ENCODE measurements at regions of chr4 and their contacts with region 1.

Region 1: DNA sequence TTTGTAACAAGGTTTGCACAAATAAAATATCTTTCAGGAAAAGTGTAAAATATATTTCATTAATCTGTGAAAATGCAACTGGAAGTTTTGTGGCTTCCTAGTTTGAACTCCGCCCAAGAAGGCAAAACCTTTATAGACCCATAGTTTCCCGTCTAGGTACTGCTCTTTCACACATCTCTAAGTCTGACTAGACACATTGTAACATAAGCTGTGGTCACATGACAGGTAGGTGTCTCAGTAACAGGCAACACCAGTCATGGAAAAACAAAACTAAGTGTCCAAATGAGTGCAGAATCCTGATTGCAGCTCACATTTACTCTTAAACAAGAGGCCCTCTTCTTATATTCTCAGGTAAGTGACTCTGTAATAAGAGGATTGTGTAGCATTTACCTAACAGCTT is 55.6 kb downstream of the SNCA start:
- DNase-seq: no peak
- ATAC-seq: no peak
- H3K4me3 ChIP-seq: no peak overlapping the region
- H3K27ac ChIP-seq: no peak overlapping the region
- H3K4me1 ChIP-seq: no peaks in the 10 kb centered on the region
- H3K27me3 ChIP-seq: peaks cover 18% of the 10 kb centered on the region
- CTCF ChIP-seq: no peak

Region 2: DNA sequence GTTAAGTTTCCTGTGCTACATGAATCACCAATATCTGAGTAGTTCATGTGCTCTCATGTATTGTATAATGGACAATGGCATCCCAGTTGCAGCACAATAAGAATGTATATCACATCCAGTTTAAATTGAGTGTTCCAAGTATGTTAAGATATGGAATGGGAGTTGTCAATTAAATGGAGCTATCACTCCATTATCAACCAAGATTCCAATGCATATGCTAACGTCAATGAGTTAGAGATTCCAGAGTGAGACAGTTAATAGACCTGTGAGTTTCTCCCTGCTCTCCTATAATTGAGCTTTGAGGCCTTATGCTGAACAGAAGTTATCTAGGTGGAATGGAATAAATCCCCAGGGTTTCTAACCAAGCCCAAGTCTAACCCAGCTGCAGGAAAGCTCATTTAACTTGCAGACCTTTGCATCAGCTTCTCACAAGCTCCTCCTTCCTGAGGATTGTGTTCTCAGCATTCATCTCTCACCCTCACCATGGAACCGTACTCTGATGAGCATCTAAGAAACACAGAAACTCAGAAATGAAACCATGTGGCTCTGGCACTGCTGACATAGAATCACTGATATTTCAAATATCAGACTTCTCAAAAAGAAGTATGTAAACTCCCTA is 585.2 kb before region 1 on chr4:
- CTCF ChIA-PET with region 1: no interaction called
- POLR2A ChIA-PET with region 1: no interaction called
- intact Hi-C with region 1: no loop called
- DNase-seq: no peak
- ATAC-seq: no peak
- H3K4me3 ChIP-seq: no peak overlapping the region
- H3K27ac ChIP-seq: no peak overlapping the region
- H3K4me1 ChIP-seq: no peaks in the 10 kb centered on the region
- H3K27me3 ChIP-seq: peaks cover 6% of the 10 kb centered on the region; the same call in 1 of the 2 replicates
- CTCF ChIP-seq: no peak

Region 3: GRCh38 chr4:89915937-89916336 is 134.6 kb after region 1 on chr4:
- CTCF ChIA-PET with region 1: no interaction called
- POLR2A ChIA-PET with region 1: interaction called, 12 read pairs
- intact Hi-C with region 1: no loop called
- DNase-seq: peak; percentile 58
- ATAC-seq: no peak
- H3K4me3 ChIP-seq: no peak overlapping the region
- H3K27ac ChIP-seq: no peak overlapping the region
- H3K4me1 ChIP-seq: no peaks in the 10 kb centered on the region
- H3K27me3 ChIP-seq: peaks cover 42% of the 10 kb centered on the region
- CTCF ChIP-seq: no peak

Measured in PC-3 (cell line).